ENCODE measurements at regions of chr14 and their contacts with region 1.

Region 1: DNA sequence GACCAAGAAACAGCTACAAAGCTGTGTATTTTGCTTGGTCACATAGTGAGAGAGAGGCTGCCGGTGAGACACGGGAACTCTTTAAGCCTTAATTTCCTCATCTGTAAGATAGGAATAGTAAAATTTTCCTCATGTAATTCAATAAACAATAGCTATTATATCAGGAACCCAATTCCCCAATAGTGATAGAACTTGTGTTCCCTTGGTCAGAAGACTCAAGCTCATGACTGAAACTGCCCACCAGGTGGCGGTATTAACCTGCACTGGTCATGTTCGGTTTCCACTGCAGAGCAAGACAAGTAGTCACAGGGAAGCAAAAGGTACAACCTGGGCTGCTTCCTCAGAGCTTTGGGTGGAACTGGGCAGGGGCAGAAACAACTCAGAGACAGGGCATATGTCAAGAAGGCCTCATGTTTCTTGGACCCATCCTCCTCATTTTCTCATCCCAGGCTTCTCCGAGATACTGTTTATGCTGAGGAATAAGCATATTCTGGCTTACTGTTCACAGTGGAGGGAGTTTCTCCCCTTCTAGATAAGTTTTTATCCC is 4.2 kb upstream of the AJUBA start:
- DNase-seq: peak; percentile 86
- ATAC-seq: peak; percentile 37; the same call in 1 of the 2 replicates
- H3K4me3 ChIP-seq: no peak overlapping the region
- H3K27ac ChIP-seq: no peak overlapping the region
- H3K4me1 ChIP-seq: no peaks in the 10 kb centered on the region
- H3K27me3 ChIP-seq: no peaks in the 10 kb centered on the region
- CTCF ChIP-seq: peak; percentile 94
- POLR2A ChIP-seq: no peak
- RAD21 ChIP-seq: peak; percentile 92

Region 2: GRCh38 chr14:22386924-22387775 is 599.4 kb before region 1 on chr14:
- CTCF ChIA-PET with region 1: no interaction called
- POLR2A ChIA-PET with region 1: no interaction called
- dilution Hi-C with region 1: no loop called
- in situ Hi-C with region 1: no loop called
- intact Hi-C with region 1: loop called (anchors 5 kb)
- DNase-seq: peak; percentile 72
- ATAC-seq: peak; percentile 83
- H3K4me3 ChIP-seq: no peak overlapping the region
- H3K27ac ChIP-seq: no peak overlapping the region
- H3K4me1 ChIP-seq: no peaks in the 10 kb centered on the region; the same call in 1 of the 2 replicates
- H3K27me3 ChIP-seq: peaks cover 8% of the 10 kb centered on the region
- CTCF ChIP-seq: peak; percentile 85
- POLR2A ChIP-seq: no peak
- RAD21 ChIP-seq: peak; percentile 88

Region 3: DNA sequence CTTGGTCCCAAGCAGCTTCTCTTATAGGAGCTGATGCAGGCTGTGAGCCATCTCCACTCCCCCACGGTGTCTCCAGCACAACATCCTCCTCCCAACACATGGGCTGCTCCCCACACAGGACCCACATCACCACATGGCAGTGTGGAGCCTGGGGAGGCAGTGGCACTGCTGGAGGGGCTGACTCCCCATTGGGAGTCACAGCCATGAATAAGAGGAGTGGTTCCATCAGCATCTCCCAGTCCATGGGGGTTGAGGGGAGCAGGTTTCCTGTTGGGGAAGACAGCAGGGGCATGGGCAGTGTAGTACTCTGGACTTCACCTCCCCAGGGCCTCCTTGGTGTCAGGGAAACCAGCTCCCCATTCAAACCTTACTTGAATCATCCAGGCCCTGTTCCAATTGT is 260.6 kb before region 1 on chr14:
- CTCF ChIA-PET with region 1: no interaction called
- POLR2A ChIA-PET with region 1: no interaction called
- dilution Hi-C with region 1: no loop called
- in situ Hi-C with region 1: no loop called
- intact Hi-C with region 1: no loop called
- DNase-seq: no peak
- ATAC-seq: no peak
- H3K4me3 ChIP-seq: no peak overlapping the region
- H3K27ac ChIP-seq: no peak overlapping the region
- H3K4me1 ChIP-seq: no peaks in the 10 kb centered on the region
- H3K27me3 ChIP-seq: peaks cover 17% of the 10 kb centered on the region
- CTCF ChIP-seq: no peak
- POLR2A ChIP-seq: no peak
- RAD21 ChIP-seq: no peak

Region 4: DNA sequence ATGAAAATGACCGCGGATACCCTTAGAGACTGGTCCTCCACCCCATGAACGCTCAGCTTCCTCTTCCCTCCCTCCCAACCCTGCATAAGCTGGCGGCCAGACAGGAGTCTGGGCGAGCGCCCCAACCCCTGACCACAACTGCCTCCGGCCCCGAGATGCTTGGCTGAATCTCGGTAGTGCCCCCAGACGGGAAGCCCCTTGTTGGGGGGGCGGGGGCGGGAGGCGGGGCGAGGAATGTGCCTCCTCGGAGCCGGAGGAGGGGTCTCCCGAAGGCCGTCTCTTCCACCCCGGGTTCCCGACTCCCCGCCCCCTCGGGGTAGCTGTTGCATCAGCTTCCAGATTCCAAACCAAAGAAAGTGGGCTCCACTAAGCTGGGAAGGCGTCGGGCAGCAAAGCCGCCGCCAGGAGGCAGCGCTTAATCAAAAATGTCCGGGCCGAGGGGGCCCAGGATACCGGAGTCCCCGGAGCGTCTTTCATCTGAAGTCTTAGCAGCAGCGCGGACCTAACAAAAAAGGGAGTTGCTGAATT is 163.9 kb before region 1 on chr14:
- CTCF ChIA-PET with region 1: interaction called, 3 read pairs
- POLR2A ChIA-PET with region 1: no interaction called
- dilution Hi-C with region 1: no loop called
- in situ Hi-C with region 1: no loop called
- intact Hi-C with region 1: loop called (anchors 5 kb)
- DNase-seq: peak; percentile 86
- ATAC-seq: peak; percentile 73
- H3K4me3 ChIP-seq: peak overlapping the region; percentile 12; the same call in 1 of the 2 replicates
- H3K27ac ChIP-seq: peak overlapping the region; percentile 76
- H3K4me1 ChIP-seq: peaks cover 30% of the 10 kb centered on the region
- H3K27me3 ChIP-seq: no peaks in the 10 kb centered on the region
- CTCF ChIP-seq: peak; percentile 94
- POLR2A ChIP-seq: peak; percentile 34; the same call in 1 of the 2 replicates
- RAD21 ChIP-seq: peak; percentile 90

Region 5: GRCh38 chr14:22872033-22872832 is 114.3 kb before region 1 on chr14:
- CTCF ChIA-PET with region 1: no interaction called
- POLR2A ChIA-PET with region 1: no interaction called
- dilution Hi-C with region 1: no loop called
- in situ Hi-C with region 1: no loop called
- intact Hi-C with region 1: loop called (anchors 5 kb)
- DNase-seq: peak; percentile 81
- ATAC-seq: peak; percentile 63
- H3K4me3 ChIP-seq: peak overlapping the region; percentile 79
- H3K27ac ChIP-seq: peak overlapping the region; percentile 84
- H3K4me1 ChIP-seq: peaks cover 3% of the 10 kb centered on the region; the same call in 1 of the 2 replicates
- H3K27me3 ChIP-seq: no peaks in the 10 kb centered on the region
- CTCF ChIP-seq: peak; percentile 91
- POLR2A ChIP-seq: no peak
- RAD21 ChIP-seq: peak; percentile 72

Region 6: DNA sequence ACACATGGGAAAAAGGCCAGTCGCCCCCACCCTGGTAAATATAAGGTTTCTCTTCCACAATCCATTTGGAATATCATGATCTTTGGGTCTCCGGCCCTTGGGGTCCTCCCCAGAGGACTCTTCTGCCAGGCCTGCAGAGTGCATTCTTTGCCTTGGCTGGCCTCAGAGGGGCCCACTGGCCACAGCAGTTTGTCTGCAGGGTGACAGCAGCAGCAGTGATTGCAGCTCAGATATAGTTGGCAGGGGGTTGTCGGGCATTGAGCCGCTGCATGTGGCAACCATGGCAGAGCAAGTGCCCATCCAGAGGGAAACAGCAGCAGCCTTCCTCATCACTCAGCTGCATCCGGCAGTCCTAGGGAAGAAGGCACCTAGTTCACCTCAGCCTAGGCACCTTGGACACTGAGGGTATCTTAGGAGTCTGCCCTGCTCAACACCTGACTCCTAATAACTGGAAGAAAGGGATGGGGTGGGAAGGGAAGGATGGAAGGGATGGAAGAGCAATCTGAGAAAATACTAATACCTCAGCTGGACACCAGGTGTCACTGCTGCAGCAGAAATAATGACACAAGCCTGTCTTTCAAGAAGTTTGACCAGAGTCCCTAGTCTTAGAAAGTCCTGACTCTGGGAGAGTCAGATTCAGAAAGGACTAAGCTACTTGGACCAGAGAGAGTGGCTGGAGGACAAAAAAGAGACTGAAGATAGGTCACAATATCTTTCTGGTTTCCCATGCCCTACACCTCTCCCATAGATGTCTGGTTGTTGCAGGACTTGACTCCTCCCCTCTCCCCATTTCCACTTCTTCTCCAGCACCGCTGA is 13.2 kb before region 1 on chr14:
- CTCF ChIA-PET with region 1: interaction called, 8 read pairs
- POLR2A ChIA-PET with region 1: interaction called, 12 read pairs
- dilution Hi-C with region 1: no loop called
- in situ Hi-C with region 1: no loop called
- intact Hi-C with region 1: loop called (anchors 1 kb)
- DNase-seq: peak; percentile 70
- ATAC-seq: peak; percentile 36
- H3K4me3 ChIP-seq: no peak overlapping the region
- H3K27ac ChIP-seq: no peak overlapping the region
- H3K4me1 ChIP-seq: peaks cover 26% of the 10 kb centered on the region
- H3K27me3 ChIP-seq: no peaks in the 10 kb centered on the region
- CTCF ChIP-seq: peak; percentile 71
- POLR2A ChIP-seq: no peak
- RAD21 ChIP-seq: peak; percentile 79

Region 7: GRCh38 chr14:23034483-23035302 is 48.1 kb after region 1 on chr14 and contains the start of gene PSMB5:
- CTCF ChIA-PET with region 1: interaction called, 3 read pairs
- POLR2A ChIA-PET with region 1: interaction called, 10 read pairs
- dilution Hi-C with region 1: no loop called
- in situ Hi-C with region 1: no loop called
- intact Hi-C with region 1: no loop called
- DNase-seq: peak; percentile 96
- ATAC-seq: peak; percentile 98
- H3K4me3 ChIP-seq: peak within 1 kb of the TSS; percentile 70
- H3K27ac ChIP-seq: peak within 1 kb of the TSS; percentile 87
- H3K4me1 ChIP-seq: peaks cover 6% of the 10 kb centered on the region; the same call in 1 of the 2 replicates
- H3K27me3 ChIP-seq: no peaks in the 10 kb centered on the region
- CTCF ChIP-seq: no peak
- POLR2A ChIP-seq: peak; percentile 87
- RAD21 ChIP-seq: no peak
- total RNA-seq, gene PSMB5: 268 and 310 TPM in 2 replicates

Region 8: GRCh38 chr14:23109769-23110168 is 123.2 kb after region 1 on chr14:
- CTCF ChIA-PET with region 1: interaction called, 4 read pairs
- POLR2A ChIA-PET with region 1: no interaction called
- dilution Hi-C with region 1: no loop called
- in situ Hi-C with region 1: no loop called
- intact Hi-C with region 1: loop called (anchors 1 kb)
- DNase-seq: no peak
- ATAC-seq: no peak
- H3K4me3 ChIP-seq: no peak overlapping the region
- H3K27ac ChIP-seq: no peak overlapping the region
- H3K4me1 ChIP-seq: peaks cover 22% of the 10 kb centered on the region
- H3K27me3 ChIP-seq: no peaks in the 10 kb centered on the region
- CTCF ChIP-seq: no peak
- POLR2A ChIP-seq: no peak
- RAD21 ChIP-seq: no peak